Heart right ventricle (tissue), 16 donors: ENCODE measurements at regions of chr21 and their contacts with region 1.

Region 1: GRCh38 chr21:44319407-44320065 is 19.7 kb downstream of the CFAP410 start:
- DNase-seq: no peak
- ATAC-seq: no peak
- H3K4me3 ChIP-seq: no peak overlapping the region
- H3K27ac ChIP-seq: no peak overlapping the region
- H3K4me1 ChIP-seq: no peaks in the 10 kb centered on the region
- H3K27me3 ChIP-seq: no peaks in the 10 kb centered on the region
- CTCF ChIP-seq: no peak

Region 2: DNA sequence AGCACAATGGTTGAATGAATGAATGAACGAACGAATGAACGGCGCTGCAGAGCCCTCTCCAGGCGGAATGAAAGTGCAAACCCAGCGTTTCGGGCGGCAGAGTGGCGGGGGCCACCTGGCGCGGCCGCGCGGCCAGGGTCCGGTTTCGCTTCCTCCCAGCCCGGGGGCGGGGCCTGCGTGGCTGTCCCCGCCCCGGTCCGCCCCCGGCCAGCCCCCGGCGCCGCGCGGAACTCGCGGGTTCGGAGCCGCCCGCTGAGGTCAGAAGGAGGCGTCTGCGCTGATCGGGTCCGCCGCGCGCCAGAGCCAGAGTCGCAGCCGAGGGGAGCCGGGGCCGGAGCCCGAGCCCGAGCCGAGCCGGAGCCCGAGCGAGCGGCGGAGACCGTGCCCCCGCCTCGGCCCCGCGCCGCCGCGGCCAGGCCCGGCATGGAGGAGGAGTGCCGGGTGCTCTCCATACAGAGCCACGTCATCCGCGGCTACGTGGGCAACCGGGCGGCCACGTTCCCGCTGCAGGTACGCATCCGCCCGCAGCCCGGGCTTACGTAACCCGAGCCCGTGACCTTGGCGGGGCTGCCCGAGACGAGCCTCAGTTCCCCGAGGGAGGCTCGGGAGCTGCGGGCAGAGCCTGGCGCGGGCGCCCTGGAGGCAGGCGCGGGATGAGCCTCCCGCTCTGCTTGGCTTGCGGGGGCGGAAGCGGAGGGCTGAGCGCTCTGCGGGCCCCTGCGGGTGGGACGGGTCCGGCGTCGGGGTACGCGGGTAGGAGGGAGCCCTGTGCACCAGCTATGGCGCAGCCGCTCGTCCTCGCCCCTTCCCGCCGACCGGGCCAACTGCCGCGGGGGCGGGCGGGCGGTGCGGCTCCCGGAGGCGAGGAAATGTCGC is 600.4 kb before region 1 on chr21 and contains the start of gene PDXK:
- intact Hi-C with region 1: no loop called
- DNase-seq: peak; percentile 84 to 89
- ATAC-seq: peak; percentile 85 to 96 (median 92)
- H3K4me3 ChIP-seq: peak within 1 kb of the TSS; percentile 63 to 100 (median 98)
- H3K27ac ChIP-seq: peak within 1 kb of the TSS; percentile 43 to 97 (median 84)
- H3K4me1 ChIP-seq: peaks cover 9 to 40% (median 28%) of the 10 kb centered on the region in 9 donors
- H3K27me3 ChIP-seq: no peaks in the 10 kb centered on the region
- CTCF ChIP-seq: peak in 2 of 9 donors; percentile 28 to 34
- total RNA-seq, gene PDXK: 64.9 to 101 (median 73.0) TPM

Region 3: DNA sequence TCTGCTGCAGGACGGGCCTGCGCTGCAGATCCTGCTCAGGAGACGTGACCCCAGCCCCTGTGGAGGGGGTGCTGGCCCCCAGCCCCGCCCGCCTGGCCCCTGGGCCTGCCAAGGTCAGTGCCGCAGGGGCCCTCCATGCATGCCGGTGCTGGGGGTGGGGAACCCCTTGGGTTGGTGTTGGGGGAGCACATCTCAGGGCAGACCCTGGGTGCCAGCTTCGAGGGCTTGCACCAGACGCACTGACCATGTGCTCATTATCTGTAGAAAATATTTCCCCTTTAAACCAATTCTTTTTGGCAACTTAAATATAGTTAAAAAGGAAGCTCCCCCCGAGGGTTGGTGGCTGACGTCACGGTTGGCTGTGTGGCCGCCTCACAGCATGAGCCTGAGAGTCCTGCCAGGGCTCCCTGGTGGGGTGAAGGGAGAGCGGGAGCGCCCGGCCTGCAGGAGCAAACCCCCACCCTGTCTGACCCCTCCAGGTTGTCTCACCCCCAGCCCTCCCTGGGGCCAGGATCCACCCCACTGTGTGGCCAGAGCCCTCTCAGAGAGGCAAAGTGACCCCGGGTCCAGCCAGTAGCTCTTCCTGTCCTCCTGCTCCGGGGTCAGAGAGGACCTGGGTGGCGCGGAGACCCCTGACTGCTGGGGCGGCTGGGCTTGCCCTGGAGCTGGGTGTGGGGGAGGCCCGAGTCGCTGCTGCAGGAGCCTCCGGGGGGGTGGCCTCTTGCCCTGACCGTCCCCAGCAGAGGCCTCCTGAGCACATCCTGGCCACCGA is 25.0 kb before region 1 on chr21:
- intact Hi-C with region 1: no loop called
- DNase-seq: peak; percentile 88 to 90
- ATAC-seq: peak in 7 of 8 donors; percentile 39 to 65 (median 57)
- H3K4me3 ChIP-seq: no peak overlapping the region
- H3K27ac ChIP-seq: peak overlapping the region in 5 of 10 donors; percentile 11 to 61 (median 19)
- H3K4me1 ChIP-seq: peaks cover 9 to 35% (median 29%) of the 10 kb centered on the region in 9 donors
- H3K27me3 ChIP-seq: peaks cover 0 to 7% (median 0%) of the 10 kb centered on the region in 7 donors
- CTCF ChIP-seq: no peak

Region 4: GRCh38 chr21:44304877-44305293 is 14.7 kb before region 1 on chr21:
- intact Hi-C with region 1: loop called in 1 of 10 experiments (anchors 2 kb)
- DNase-seq: no peak
- ATAC-seq: peak in 5 of 8 donors; percentile 30 to 41 (median 36)
- H3K4me3 ChIP-seq: no peak overlapping the region
- H3K27ac ChIP-seq: peak overlapping the region in 1 of 10 donors; percentile 25
- H3K4me1 ChIP-seq: peaks cover 38 to 63% (median 48%) of the 10 kb centered on the region in 9 donors
- H3K27me3 ChIP-seq: no peaks in the 10 kb centered on the region
- CTCF ChIP-seq: peak; percentile 22 to 68 (median 61)